Ascending aorta (tissue), 2 donors: ENCODE measurements at regions of chr7 and their contacts with region 1.

Region 1: DNA sequence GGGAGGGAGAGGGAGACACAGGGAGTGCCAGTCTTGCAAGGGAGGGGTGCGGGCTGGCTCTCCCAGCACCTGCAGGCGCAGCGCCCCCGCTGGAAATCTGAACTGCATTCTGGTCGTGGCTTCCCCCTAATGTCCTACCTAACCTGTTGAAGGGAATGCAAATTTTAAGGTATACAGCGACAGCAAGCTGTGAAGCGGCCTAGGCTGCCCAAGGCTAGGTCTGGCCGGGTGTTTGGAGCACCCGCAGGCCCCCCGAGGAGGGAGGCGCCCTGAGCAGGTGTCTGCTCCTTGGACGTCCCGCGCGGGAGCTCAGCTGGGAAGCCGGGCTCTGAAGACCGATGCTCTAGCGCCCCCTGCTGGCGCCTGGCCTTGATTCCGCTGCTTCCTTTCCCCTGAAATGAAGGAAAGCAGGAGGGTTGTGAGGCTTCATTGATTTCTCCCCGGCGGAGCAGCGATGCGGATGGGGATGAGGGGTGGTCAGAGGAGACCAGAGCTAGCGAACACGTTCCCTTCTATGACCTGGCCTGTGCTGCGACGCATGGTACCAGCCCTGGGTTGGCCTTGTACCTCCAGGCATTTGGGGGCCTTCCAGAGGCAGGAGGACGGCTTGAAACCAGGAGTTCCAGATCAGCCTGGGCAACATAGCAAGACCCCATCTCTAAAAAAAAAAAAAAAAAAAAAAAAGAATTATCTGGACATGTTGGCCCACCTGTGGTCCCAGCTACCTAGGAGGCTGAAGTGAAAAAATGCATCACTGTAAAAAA is 601.3 kb downstream of the GALNT17 start:
- DNase-seq: peak in 1 of 2 donors; percentile 78
- H3K4me3 ChIP-seq: peak overlapping the region in 1 of 2 donors; percentile 43
- H3K27ac ChIP-seq: no peak overlapping the region
- H3K4me1 ChIP-seq: no peaks in the 10 kb centered on the region
- H3K27me3 ChIP-seq: no peaks in the 10 kb centered on the region
- CTCF ChIP-seq: peak; percentile 79 to 92 (median 87)

Region 2: DNA sequence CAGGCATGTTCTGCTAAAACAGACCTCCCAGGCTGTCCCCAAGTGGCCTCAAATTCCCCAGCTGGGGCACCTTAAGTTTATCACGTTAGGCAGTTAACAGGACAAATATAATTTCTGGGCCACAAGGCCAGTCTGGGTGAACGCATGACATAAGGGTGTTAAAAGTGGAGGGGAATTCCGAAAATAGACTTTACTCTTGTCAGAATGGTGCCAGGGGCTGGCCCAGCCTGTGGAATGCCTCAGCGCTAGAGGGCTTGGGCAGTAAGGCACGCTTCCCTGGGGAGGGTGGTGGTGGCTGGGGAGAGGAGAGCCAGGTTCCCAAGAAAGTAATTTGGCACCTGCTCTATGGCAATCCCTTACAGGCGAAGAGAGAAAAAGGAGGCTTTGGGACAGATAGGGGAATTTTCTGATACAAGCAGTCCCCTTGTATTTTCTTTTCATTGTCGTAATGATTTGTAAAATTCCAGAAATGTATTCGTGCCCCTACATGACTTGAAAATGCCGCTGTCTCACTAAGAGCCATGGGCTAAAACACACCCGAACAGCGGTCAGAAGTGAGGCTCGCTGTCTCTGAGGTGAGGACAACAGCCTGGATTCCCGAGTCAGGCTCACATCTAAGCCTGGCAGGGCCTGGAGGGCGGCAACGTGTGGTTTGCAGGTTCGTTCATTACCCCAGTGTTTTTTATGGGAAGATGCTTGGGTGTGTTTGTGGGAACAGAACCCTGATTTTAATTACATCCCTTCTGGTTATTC is 1064.5 kb before region 1 on chr7:
- intact Hi-C with region 1: no loop called
- DNase-seq: peak; percentile 36 to 79
- H3K4me3 ChIP-seq: peak overlapping the region in 1 of 2 donors; percentile 14
- H3K27ac ChIP-seq: peak overlapping the region; percentile 5 to 53
- H3K4me1 ChIP-seq: peaks cover 0 to 9% of the 10 kb centered on the region in 2 donors
- H3K27me3 ChIP-seq: no peaks in the 10 kb centered on the region
- CTCF ChIP-seq: no peak

Region 3: DNA sequence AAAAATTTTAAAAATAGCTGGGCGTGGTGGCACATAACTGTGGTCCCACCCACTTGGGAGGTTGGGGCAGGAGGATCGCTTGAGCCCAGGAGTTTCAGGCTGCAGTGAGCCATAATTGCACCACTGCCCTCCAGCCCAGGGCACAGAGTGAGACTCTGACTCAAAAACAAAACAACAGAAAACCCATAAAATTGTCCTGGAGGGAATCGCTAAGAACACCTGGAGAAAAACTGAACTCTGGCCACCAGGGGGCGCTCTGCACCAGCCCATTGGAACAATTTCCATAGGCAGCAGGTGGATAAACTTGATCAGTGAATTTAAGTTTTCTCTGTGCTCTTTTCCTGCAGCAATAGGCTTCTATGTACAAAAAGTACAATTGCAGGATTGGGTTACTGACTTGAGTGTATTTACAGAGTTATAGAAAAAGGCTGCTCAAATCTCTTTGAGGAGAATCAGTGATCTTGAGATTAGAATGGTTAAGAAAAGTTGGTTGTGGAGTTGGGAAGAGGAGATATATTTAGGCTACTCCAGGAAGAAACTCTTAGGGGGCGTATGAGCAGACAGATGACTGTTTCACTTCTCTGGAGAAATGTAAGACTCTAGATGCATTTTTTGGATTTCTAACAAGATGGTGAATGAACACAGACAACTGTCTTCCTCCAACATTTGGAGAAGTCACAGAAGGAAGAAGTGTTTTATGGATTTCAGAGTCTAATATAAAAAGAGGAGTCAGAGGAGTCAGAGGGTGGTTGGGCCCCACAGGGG is 876.2 kb before region 1 on chr7:
- intact Hi-C with region 1: loop called (anchors 1 kb)
- DNase-seq: peak in 1 of 2 donors; percentile 76
- H3K4me3 ChIP-seq: no peak overlapping the region
- H3K27ac ChIP-seq: no peak overlapping the region
- H3K4me1 ChIP-seq: no peaks in the 10 kb centered on the region
- H3K27me3 ChIP-seq: no peaks in the 10 kb centered on the region
- CTCF ChIP-seq: peak; percentile 74 to 94 (median 90)

Region 4: GRCh38 chr7:71237945-71238344 is 495.3 kb before region 1 on chr7:
- intact Hi-C with region 1: loop called (anchors 5 kb)
- DNase-seq: peak in 1 of 2 donors; percentile 72
- H3K4me3 ChIP-seq: no peak overlapping the region
- H3K27ac ChIP-seq: peak overlapping the region; percentile 79 to 84
- H3K4me1 ChIP-seq: peaks cover 0 to 21% of the 10 kb centered on the region in 2 donors
- H3K27me3 ChIP-seq: no peaks in the 10 kb centered on the region
- CTCF ChIP-seq: peak in 2 of 3 experiments; percentile 49 to 59

Region 5: GRCh38 chr7:71477441-71477840 is 255.8 kb before region 1 on chr7:
- intact Hi-C with region 1: loop called (anchors 10 kb)
- DNase-seq: no peak
- H3K4me3 ChIP-seq: no peak overlapping the region
- H3K27ac ChIP-seq: no peak overlapping the region
- H3K4me1 ChIP-seq: no peaks in the 10 kb centered on the region
- H3K27me3 ChIP-seq: no peaks in the 10 kb centered on the region
- CTCF ChIP-seq: no peak